Lower leg skin (tissue), 4 donors: ENCODE measurements at regions of chr4 and their contacts with region 1.

Region 1: DNA sequence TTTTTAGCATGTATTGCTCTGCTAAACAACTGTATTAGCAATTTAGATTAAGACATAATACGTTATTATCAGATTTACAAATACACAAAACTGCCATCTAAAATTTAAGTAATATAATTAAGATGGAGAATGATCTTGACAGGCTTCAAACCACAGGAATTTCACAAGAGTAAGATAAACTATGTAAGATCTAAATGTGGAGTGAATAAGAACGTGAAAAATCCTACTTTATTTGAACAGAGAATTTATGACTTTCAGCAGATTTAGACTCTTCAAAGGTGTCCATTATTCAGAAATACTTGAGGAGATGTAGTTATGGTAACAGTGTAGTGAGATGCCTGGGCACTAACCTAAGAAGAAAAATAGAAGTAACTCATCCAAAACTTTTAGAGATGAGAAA is 73.2 kb downstream of the SLC4A4 start:
- DNase-seq: no peak
- H3K4me3 ChIP-seq: no peak overlapping the region
- CTCF ChIP-seq: no peak
- POLR2A ChIP-seq: no peak

Region 2: DNA sequence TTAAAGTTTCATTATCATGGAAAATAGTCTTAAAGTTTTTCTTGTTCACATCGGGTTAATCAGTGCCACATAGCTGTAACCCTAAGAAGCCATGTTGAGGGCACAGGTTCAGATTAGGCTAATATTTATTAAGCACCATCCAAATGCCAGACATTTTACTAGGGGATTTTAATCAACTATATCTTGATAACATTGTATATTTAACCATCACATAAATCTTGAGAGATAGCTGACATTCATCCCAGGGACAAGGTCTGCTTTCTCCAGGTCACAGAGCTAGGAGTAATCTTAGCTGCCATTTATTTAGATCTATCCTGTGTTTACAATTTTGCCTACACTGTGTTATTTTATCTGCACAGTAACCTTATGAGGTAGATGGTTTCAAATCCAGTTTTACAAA is 68.7 kb after region 1 on chr4:
- intact Hi-C with region 1: loop called (anchors 2 kb)
- DNase-seq: no peak
- H3K4me3 ChIP-seq: no peak overlapping the region
- CTCF ChIP-seq: no peak
- POLR2A ChIP-seq: no peak